Panc1 (cell line): ENCODE measurements at regions of chr16 and their contacts with region 1.

Region 1: GRCh38 chr16:86797700-86798099 is 219.4 kb downstream of the FOXL1 start:
- DNase-seq: no peak
- ATAC-seq: no peak
- H3K4me3 ChIP-seq: no peak overlapping the region
- H3K27ac ChIP-seq: no peak overlapping the region
- H3K4me1 ChIP-seq: no peaks in the 10 kb centered on the region
- H3K27me3 ChIP-seq: no peaks in the 10 kb centered on the region
- CTCF ChIP-seq: no peak

Region 2: DNA sequence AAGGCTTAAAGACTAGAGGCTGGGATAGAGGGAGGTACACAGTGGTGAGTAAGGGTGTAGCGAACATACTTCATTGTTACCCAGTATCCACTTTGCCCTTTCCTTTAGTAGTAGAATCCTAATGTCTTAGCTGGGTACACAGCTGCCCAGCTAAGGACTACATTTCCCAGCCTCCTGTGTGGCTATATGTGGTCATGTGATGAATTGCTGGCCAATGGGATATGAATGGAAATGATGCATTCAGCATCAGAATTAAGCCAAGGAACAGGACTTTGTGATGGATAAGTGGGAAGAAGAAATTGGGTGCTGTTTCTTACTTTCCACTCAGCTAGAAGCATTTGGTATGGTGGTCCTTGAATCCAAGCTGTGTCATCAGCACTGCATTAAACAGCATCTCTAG is 163.4 kb before region 1 on chr16:
- CTCF ChIA-PET with region 1: no interaction called
- POLR2A ChIA-PET with region 1: no interaction called
- in situ Hi-C with region 1: no loop called
- intact Hi-C with region 1: no loop called
- DNase-seq: no peak
- ATAC-seq: 0 out of 2 replicates have a peak, but pooled peaks have one; percentile 58
- H3K4me3 ChIP-seq: no peak overlapping the region
- H3K27ac ChIP-seq: no peak overlapping the region
- H3K4me1 ChIP-seq: no peaks in the 10 kb centered on the region
- H3K27me3 ChIP-seq: no peaks in the 10 kb centered on the region
- CTCF ChIP-seq: no peak

Region 3: GRCh38 chr16:86751076-86752030 is 46.3 kb before region 1 on chr16:
- CTCF ChIA-PET with region 1: no interaction called
- POLR2A ChIA-PET with region 1: no interaction called
- in situ Hi-C with region 1: no loop called
- intact Hi-C with region 1: no loop called
- DNase-seq: no peak
- ATAC-seq: no peak
- H3K4me3 ChIP-seq: no peak overlapping the region
- H3K27ac ChIP-seq: no peak overlapping the region
- H3K4me1 ChIP-seq: no peaks in the 10 kb centered on the region
- H3K27me3 ChIP-seq: no peaks in the 10 kb centered on the region
- CTCF ChIP-seq: no peak

Region 4: GRCh38 chr16:86982912-86983311 is 185.2 kb after region 1 on chr16:
- CTCF ChIA-PET with region 1: no interaction called
- POLR2A ChIA-PET with region 1: interaction called, 13 read pairs
- in situ Hi-C with region 1: no loop called
- intact Hi-C with region 1: no loop called
- DNase-seq: no peak
- ATAC-seq: no peak
- H3K4me3 ChIP-seq: no peak overlapping the region
- H3K27ac ChIP-seq: no peak overlapping the region
- H3K4me1 ChIP-seq: no peaks in the 10 kb centered on the region
- H3K27me3 ChIP-seq: no peaks in the 10 kb centered on the region
- CTCF ChIP-seq: no peak